PC-9 (cell line): ENCODE measurements at regions of chr9 and their contacts with region 1.

Region 1: DNA sequence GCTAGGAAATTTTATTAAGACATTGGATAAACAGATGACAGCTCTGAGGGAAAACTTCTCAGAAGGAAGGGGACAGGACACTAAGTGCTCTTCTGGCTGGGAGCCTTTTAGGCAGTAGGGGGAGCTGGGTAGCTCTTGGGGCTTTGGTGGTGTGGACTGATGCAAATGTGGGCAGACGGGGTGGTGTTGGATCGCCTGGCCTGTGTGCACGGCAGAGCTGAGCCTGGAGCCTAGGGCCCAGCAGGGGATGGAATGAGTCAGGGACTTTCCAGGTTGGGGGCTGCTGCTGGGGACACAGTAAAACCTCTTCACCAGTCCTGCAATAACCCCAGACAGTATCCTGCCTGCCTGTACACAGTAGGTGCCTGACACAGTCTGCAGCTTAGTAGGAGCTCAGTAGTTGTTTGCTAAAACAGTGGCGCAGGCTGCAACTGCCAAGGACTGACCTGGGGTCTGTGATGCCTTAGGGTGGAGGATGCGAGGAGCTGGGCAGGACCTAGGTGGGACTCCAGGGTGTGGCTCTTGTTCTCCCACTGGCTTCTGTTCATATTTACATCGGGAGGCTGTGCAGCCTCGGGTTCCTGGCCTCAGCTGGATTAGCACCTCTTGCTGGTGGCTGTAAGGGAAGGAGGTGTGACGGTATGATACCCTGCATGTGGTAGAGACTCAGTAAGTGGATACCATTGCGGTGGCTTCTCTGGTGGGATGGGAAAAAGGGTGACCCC is 83.8 kb downstream of the DAB2IP start:
- DNase-seq: peak; percentile 56 to 62
- H3K4me3 ChIP-seq: peak overlapping the region; percentile 73; the same call in 1 of the 2 replicates
- H3K27ac ChIP-seq: peak overlapping the region; percentile 66
- H3K4me1 ChIP-seq: peaks cover 51% of the 10 kb centered on the region
- H3K27me3 ChIP-seq: no peaks in the 10 kb centered on the region
- CTCF ChIP-seq: peak; percentile 65

Region 2: GRCh38 chr9:121650217-121651007 is 84.8 kb before region 1 on chr9:
- CTCF ChIA-PET with region 1: no interaction called
- POLR2A ChIA-PET with region 1: no interaction called
- intact Hi-C with region 1: loop called (anchors 2 kb)
- DNase-seq: peak; percentile 51 to 85
- H3K4me3 ChIP-seq: no peak overlapping the region
- H3K27ac ChIP-seq: no peak overlapping the region
- H3K4me1 ChIP-seq: peaks cover 16% of the 10 kb centered on the region
- H3K27me3 ChIP-seq: peaks cover 15% of the 10 kb centered on the region; the same call in 1 of the 2 replicates
- CTCF ChIP-seq: no peak

Region 3: DNA sequence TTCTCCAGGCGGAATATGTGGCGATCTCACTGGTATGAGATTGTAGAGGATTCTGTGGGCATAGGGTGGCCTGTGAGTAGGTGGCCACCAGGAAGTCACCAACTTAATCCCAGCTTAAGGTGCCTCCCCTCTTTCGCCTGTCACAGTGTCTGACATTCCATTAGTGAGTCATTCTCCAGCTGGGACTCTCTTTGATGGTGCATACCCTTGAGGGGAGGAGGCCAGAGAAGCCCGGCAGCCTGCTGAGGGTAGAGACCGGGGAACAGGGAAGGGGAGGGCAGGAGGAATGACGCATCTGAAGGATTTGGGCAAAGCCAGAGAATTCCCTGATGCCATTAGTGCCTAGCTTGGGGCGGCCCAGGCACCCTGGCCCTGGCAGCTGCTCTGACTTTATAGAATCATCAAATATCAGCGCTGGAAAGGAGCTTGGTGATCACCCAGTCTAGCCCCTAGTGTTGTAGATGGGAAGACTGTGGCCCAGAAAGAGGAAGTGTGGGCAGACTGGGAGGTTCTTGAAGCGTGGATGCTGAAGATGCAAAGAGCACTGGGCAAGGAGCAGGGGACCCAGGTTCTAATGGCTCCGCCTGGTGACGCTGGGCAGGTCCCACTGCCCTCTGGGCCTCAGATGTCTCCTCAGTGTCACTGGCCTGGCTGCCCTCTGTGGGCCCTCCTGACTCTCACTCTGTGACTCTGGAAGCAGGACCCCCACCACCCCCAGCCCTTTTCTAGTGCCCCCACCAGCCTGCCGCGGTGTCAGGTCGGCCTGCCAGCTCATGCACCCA is 42.4 kb before region 1 on chr9:
- CTCF ChIA-PET with region 1: interaction called, 3 read pairs
- POLR2A ChIA-PET with region 1: no interaction called
- intact Hi-C with region 1: loop called (anchors 2 kb)
- DNase-seq: peak; percentile 83 to 91
- H3K4me3 ChIP-seq: no peak overlapping the region
- H3K27ac ChIP-seq: peak overlapping the region; percentile 48; the same call in 1 of the 2 replicates
- H3K4me1 ChIP-seq: peaks cover 14% of the 10 kb centered on the region
- H3K27me3 ChIP-seq: no peaks in the 10 kb centered on the region
- CTCF ChIP-seq: no peak

Region 4: DNA sequence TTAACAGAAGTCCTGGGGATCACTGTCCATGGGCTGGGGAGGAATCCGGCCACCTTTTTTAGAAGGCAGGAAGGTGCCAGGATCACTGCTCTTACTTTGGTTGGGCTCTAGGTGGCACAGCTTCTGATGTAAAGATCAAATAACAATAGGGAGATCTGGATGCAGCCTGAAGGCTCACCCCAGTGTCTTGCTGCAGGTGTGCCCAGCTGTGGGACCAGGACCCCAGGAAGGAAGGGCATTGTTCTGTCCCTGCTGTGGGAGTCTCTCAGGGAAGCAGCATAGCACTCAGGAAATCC is 14.2 kb before region 1 on chr9:
- CTCF ChIA-PET with region 1: interaction called, 6 read pairs
- POLR2A ChIA-PET with region 1: interaction called, 4 read pairs
- intact Hi-C with region 1: loop called (anchors 1 kb)
- DNase-seq: no peak
- H3K4me3 ChIP-seq: no peak overlapping the region
- H3K27ac ChIP-seq: no peak overlapping the region
- H3K4me1 ChIP-seq: peaks cover 15% of the 10 kb centered on the region
- H3K27me3 ChIP-seq: no peaks in the 10 kb centered on the region
- CTCF ChIP-seq: peak; percentile 20; the same call in 1 of the 2 replicates

Region 5: GRCh38 chr9:121765021-121765950 is 30.1 kb after region 1 on chr9:
- CTCF ChIA-PET with region 1: interaction called, 3 read pairs
- POLR2A ChIA-PET with region 1: interaction called, 11 read pairs
- intact Hi-C with region 1: loop called (anchors 1 kb)
- DNase-seq: peak; percentile 88 to 94
- H3K4me3 ChIP-seq: no peak overlapping the region
- H3K27ac ChIP-seq: peak overlapping the region; percentile 80
- H3K4me1 ChIP-seq: peaks cover 18% of the 10 kb centered on the region
- H3K27me3 ChIP-seq: no peaks in the 10 kb centered on the region
- CTCF ChIP-seq: peak; percentile 57; the same call in 1 of the 2 replicates

Region 6: DNA sequence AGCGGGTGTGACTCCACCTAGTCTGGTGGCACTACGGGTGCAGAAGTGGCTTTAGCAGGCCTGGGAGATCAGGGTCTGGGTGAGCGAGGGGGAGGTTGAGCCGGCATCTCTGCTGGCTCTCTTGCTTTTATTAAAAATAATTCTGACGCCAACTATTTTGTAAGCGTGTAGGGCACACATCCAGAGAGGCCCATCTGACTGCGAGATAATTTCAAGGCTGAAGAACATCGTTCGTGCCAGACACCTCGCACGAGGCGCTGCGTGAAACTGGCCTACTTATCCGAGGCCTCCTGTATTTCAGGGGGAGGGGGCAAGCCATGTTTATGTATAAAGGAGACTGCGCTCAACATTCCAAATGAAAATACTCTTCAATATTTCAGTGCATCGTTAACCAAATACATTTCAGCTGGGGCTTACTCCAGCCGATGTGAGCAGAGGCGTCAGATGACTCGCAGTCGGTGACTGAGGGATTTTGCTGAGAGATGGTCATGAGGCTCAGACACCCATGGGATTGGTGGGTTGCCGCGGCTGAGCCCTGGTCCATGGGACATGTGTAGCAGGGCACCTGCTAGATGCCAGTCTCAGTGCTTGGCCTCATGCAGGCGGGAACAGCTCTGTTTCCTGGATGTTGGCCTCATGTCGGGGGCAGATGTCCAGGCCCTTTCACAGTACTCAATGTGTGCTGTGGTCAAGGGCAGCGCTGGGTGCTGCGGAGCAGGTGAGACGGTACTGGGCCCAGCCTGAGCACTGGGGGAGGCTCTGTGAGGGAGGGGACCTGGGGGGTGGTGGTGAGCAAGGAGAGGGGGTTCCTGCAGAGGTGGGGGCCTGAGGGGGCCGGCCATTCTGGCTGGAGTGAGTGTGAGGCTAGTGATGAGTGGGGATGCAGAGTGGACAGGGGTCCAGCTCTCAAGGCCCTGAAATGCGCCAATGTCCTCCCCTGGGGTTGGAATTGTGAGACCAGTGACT is 117.7 kb after region 1 on chr9:
- CTCF ChIA-PET with region 1: no interaction called
- POLR2A ChIA-PET with region 1: no interaction called
- intact Hi-C with region 1: no loop called
- DNase-seq: no peak
- H3K4me3 ChIP-seq: no peak overlapping the region
- H3K27ac ChIP-seq: no peak overlapping the region
- H3K4me1 ChIP-seq: no peaks in the 10 kb centered on the region
- H3K27me3 ChIP-seq: no peaks in the 10 kb centered on the region
- CTCF ChIP-seq: no peak

Region 7: GRCh38 chr9:121884057-121884541 is 148.9 kb after region 1 on chr9:
- CTCF ChIA-PET with region 1: interaction called, 11 read pairs
- POLR2A ChIA-PET with region 1: no interaction called
- intact Hi-C with region 1: no loop called
- DNase-seq: no peak
- H3K4me3 ChIP-seq: no peak overlapping the region
- H3K27ac ChIP-seq: no peak overlapping the region
- H3K4me1 ChIP-seq: no peaks in the 10 kb centered on the region
- H3K27me3 ChIP-seq: no peaks in the 10 kb centered on the region
- CTCF ChIP-seq: no peak

Region 8: DNA sequence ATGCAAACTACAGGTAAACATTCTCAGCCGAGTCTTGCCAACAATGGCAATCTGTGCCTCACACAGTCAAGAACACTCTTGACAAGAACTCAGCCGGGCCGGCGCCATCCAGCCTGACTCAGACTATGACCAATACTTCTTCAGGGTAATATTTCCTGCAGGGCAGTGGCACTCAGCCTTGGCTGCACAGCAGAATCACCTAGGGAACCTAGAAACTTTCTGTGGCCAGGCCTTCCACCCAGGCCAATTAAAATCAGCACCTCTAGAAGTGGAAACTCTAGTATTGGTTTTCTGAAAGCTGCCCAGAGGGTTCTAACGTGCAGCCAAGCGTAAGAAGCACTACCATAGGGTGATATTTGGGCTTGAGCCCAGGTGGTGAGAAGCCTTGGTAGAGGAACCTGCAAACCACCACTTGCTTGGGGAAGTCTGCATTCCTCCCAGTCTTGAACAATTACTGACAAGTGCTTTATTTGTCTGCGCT is 237.3 kb after region 1 on chr9:
- CTCF ChIA-PET with region 1: no interaction called
- POLR2A ChIA-PET with region 1: no interaction called
- intact Hi-C with region 1: loop called (anchors 5 kb)
- DNase-seq: peak; percentile 90 to 97
- H3K4me3 ChIP-seq: no peak overlapping the region
- H3K27ac ChIP-seq: peak overlapping the region; percentile 60
- H3K4me1 ChIP-seq: peaks cover 27% of the 10 kb centered on the region
- H3K27me3 ChIP-seq: no peaks in the 10 kb centered on the region
- CTCF ChIP-seq: no peak

Region 9: DNA sequence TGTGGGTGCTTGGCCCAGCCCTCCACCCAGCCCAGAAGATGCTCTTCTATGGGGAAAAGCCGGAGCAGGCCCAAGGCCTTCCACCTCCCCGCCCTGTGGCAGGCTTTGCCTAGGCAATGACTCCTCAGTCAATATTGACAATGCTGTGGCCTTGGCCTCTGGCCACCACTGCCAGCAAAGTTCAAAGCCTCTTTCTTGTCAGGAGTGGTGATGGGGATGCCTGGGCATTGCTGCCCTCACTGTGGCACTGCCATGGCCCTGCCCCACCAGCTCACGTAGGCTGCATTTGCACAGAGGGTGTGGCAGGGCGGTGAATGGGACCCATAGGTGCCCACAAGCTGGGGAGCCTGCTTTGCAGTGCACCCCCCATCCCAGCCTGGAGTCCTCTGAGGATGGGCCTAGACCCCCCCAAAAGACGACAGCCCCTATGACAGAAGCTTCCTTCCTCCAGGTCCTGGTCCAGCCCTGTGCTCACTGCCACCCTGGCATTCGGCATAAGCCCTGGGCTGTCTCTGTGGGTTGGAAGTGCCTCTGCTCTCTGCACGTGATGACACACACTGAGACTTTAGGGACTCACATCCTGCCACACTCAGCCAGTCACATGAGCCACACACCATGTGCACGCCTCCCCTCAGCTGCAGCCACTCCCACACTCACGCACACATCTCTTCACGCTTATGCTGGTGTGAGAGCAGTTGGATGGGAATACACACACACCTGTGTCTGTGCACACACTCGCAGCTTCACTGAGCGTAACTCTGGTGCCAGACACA is 455.6 kb after region 1 on chr9:
- CTCF ChIA-PET with region 1: no interaction called
- POLR2A ChIA-PET with region 1: no interaction called
- intact Hi-C with region 1: no loop called
- DNase-seq: peak in 1 of 2 experiments; percentile 41
- H3K4me3 ChIP-seq: no peak overlapping the region
- H3K27ac ChIP-seq: no peak overlapping the region
- H3K4me1 ChIP-seq: no peaks in the 10 kb centered on the region
- H3K27me3 ChIP-seq: peaks cover 4% of the 10 kb centered on the region; the same call in 1 of the 2 replicates
- CTCF ChIP-seq: no peak